ENCODE measurements at regions of chr11 and their contacts with region 1.

Region 1: GRCh38 chr11:12963792-12964536 is 45.2 kb upstream of the RASSF10 start:
- DNase-seq: peak; percentile 46
- H3K4me3 ChIP-seq: no peak overlapping the region
- H3K27ac ChIP-seq: no peak overlapping the region
- H3K4me1 ChIP-seq: peaks cover 22% of the 10 kb centered on the region
- H3K27me3 ChIP-seq: no peaks in the 10 kb centered on the region
- CTCF ChIP-seq: peak; percentile 86 to 90

Region 2: DNA sequence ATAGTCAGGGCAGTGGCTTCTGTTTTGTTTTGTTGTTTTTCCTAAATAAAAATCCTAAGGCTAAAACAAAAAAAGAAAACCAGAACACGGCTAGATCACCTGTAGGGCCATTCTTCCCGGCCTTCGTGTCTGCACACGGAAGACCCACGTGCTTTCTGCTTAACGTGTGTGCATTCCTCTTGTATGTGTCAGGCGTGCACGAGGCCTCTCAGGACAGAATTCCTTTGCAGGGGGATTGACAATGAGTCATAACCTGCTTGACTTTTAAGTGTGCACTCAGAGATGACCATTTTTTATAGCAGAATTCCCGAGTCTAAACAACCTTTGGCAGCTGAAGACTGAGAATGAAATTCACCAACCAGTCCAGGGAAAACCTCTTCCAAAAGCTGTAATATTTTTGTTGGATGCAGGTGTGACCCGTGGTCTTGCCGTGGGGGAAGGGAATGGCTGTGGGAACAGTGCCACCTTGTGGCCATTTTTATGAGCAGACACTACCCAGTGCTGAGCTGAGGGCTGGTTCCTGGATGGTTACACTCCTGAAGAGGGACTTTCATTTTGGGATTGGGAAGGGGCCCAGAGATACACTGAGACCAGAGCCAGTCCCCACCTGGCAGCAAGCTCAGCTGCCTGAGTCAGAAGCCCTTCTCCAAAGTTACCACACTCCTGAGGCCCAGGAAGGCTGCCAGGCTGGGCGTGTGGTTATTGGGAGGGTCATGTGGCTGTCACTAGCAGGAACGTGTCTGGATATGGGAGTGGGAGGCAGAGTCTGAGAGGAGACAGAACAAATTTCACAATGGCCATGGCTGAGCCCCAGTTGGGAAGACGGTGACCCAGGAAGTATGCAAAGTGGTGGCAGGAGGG is 919.8 kb before region 1 on chr11:
- CTCF ChIA-PET with region 1: no interaction called
- dilution Hi-C with region 1: no loop called
- in situ Hi-C with region 1: no loop called
- intact Hi-C with region 1: loop called (anchors 5 kb)
- DNase-seq: peak; percentile 94
- H3K4me3 ChIP-seq: no peak overlapping the region
- H3K27ac ChIP-seq: peak overlapping the region; percentile 69
- H3K4me1 ChIP-seq: peaks cover 41% of the 10 kb centered on the region
- H3K27me3 ChIP-seq: no peaks in the 10 kb centered on the region
- CTCF ChIP-seq: peak; percentile 78 to 91

Region 3: GRCh38 chr11:12411806-12412727 is 551.9 kb before region 1 on chr11:
- CTCF ChIA-PET with region 1: no interaction called
- dilution Hi-C with region 1: no loop called
- in situ Hi-C with region 1: no loop called
- intact Hi-C with region 1: loop called (anchors 5 kb)
- DNase-seq: peak; percentile 86
- H3K4me3 ChIP-seq: no peak overlapping the region
- H3K27ac ChIP-seq: peak overlapping the region; percentile 81
- H3K4me1 ChIP-seq: peaks cover 45% of the 10 kb centered on the region
- H3K27me3 ChIP-seq: no peaks in the 10 kb centered on the region
- CTCF ChIP-seq: peak; percentile 74 to 76

Region 4: GRCh38 chr11:13016415-13016814 is 52.5 kb after region 1 on chr11:
- CTCF ChIA-PET with region 1: interaction called, 16 read pairs
- dilution Hi-C with region 1: no loop called
- in situ Hi-C with region 1: no loop called
- intact Hi-C with region 1: loop called (anchors 1 kb)
- DNase-seq: peak; percentile 44
- H3K4me3 ChIP-seq: no peak overlapping the region
- H3K27ac ChIP-seq: no peak overlapping the region
- H3K4me1 ChIP-seq: peaks cover 21% of the 10 kb centered on the region
- H3K27me3 ChIP-seq: no peaks in the 10 kb centered on the region
- CTCF ChIP-seq: peak; percentile 26 to 42

Region 5: DNA sequence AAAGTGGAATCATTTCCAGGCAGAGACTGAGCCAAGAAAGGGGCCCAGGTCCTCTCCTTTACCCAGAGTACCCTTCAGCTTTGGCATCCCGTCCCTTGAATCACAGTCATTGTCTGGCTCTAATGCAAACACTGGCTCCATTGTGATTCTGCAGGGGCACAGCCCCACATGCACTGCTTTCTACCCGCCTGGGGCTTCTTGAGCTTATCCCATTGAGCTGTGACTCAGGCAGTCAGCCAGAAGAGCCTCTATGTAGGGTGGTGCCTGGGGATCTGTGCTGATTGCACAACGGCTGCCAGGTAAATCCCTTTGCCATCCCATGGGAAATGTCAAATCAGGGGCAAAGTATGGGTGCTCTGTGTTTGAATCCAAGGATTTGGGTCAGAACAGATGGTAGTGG is 134.1 kb after region 1 on chr11:
- CTCF ChIA-PET with region 1: no interaction called
- dilution Hi-C with region 1: no loop called
- in situ Hi-C with region 1: no loop called
- intact Hi-C with region 1: no loop called
- DNase-seq: peak; percentile 99
- H3K4me3 ChIP-seq: no peak overlapping the region
- H3K27ac ChIP-seq: peak overlapping the region; percentile 91
- H3K4me1 ChIP-seq: peaks cover 19% of the 10 kb centered on the region
- H3K27me3 ChIP-seq: no peaks in the 10 kb centered on the region
- CTCF ChIP-seq: no peak

Region 6: DNA sequence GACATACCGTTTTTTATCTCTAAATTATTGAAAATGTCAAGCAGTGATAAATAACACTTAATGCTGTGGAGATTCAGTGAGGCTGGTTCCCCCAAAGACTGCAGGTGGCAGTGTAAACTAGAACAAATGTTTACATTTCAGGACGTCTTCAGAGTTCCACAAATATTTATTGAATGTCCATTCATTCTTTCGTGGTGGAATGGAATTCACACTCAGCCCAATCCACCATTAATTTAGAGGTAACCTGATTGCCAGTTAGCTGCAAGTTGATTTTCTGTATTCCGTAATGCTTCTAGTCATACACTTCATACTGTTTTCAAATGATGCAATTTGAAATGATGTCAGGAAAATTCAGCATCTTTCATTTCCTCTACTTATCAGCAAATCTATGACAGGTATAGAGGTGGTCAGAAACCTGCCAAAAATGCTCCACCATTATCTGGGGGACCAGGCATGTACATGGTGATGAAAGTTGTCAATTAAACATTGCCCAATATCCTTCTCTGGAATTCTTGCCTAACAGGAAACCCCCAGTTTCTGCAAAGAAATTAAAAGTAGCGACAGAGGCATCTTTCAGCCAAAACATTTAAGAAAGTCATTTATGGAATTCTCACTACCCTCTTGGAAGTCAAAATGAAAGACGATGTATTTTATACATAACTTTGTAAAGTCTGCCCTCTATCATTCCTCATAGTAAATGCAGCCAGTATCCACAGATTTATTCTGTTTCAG is 219.3 kb after region 1 on chr11:
- CTCF ChIA-PET with region 1: no interaction called
- dilution Hi-C with region 1: no loop called
- in situ Hi-C with region 1: loop called in 1 of 2 experiments (anchors 10 kb)
- intact Hi-C with region 1: loop called (anchors 1 kb)
- DNase-seq: peak; percentile 77
- H3K4me3 ChIP-seq: peak overlapping the region in 2 of 3 experiments; percentile 4 to 27
- H3K27ac ChIP-seq: peak overlapping the region; percentile 5
- H3K4me1 ChIP-seq: peaks cover 7% of the 10 kb centered on the region
- H3K27me3 ChIP-seq: no peaks in the 10 kb centered on the region
- CTCF ChIP-seq: peak; percentile 56 to 63

Region 7: DNA sequence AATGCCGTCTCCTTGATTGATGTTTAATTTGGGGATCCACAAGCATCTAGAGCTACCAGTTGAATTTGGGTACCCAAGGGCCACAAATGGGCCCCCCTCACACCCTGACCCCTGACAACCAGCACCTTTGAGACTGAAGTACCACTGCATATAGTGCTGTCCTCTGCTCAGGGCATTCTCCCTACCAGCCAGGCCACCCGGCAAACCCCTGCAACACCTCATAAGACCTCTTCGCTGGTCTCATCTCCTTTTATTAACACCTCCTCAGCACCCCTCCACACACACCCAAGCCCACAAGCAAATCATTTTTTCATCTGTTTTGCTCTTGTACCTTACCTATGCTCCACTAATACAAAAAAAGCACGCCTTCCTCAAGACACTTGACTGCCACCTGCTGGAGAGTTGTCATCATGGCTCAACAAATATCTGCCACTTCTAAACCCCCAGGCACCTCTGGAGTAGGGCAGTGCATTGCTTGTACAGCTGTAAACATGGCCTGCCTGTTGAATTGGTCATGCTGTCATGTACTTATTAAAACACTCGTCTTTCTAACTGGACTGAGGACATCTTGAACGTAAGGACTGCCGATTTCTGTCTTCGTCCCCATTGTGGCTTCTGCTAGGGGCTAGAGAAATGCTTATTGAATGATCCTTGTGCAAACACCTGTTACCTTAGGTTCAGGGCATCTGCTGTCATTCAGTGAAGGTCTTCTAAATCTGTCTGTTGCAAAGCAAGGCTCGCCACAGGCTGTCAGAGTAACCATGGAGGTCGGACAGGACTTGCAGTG is 380.2 kb after region 1 on chr11:
- CTCF ChIA-PET with region 1: no interaction called
- dilution Hi-C with region 1: no loop called
- in situ Hi-C with region 1: loop called (anchors 10 kb)
- intact Hi-C with region 1: loop called (anchors 1 kb)
- DNase-seq: peak; percentile 64
- H3K4me3 ChIP-seq: no peak overlapping the region
- H3K27ac ChIP-seq: no peak overlapping the region
- H3K4me1 ChIP-seq: peaks cover 30% of the 10 kb centered on the region
- H3K27me3 ChIP-seq: no peaks in the 10 kb centered on the region
- CTCF ChIP-seq: peak; percentile 79 to 82